Calu3 (cell line): ENCODE measurements at regions of chr7 and their contacts with region 1.

Region 1: DNA sequence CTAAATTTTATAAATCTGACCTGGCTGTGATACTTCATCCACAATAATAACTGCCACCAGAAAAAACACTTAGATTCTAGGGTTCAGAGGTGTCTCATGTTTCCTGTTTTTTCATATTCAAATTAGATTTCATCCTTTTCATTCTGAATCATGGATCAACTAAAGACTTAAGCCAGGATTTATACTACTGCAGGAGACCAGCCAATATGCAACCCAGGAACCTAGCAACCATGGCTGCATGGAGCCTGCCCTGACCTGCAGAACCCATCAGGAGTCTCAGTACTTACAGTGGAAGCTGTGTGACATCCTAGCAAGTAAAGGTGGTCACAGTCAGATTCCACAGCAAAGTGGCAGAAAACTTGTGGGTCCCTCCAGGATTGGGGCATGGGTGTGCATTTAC is 40.5 kb upstream of the RNF148 start:
- DNase-seq: no peak
- H3K4me3 Mint-ChIP-seq: no peak overlapping the region
- H3K27ac Mint-ChIP-seq: no peak overlapping the region
- H3K4me1 Mint-ChIP-seq: no peaks in the 10 kb centered on the region
- H3K27me3 Mint-ChIP-seq: no peaks in the 10 kb centered on the region
- CTCF ChIP-seq: no peak

Region 2: DNA sequence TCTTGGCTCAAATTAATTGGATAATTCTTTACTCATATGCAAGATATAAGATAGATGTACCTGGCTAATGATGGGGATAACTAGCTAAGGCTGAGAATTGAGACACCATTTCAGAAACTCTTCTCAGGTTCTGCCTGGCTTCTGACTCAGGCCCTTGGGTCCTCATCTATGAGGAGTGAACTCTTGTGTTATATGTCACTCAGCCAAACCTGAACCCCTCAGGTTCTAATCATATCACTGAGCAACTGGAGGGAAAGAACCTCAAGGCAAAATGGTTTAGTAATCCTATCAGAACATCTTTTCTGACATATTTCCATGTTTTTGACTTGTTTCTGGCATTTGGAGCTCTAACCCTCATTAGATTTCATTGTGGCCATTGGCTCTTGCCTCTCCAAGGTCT is 1654.3 kb before region 1 on chr7:
- CTCF ChIA-PET with region 1: interaction called, 13 read pairs
- intact Hi-C with region 1: no loop called
- DNase-seq: no peak
- H3K4me3 Mint-ChIP-seq: no peak overlapping the region
- H3K27ac Mint-ChIP-seq: no peak overlapping the region
- H3K4me1 Mint-ChIP-seq: peaks cover 38% of the 10 kb centered on the region
- H3K27me3 Mint-ChIP-seq: no peaks in the 10 kb centered on the region
- CTCF ChIP-seq: no peak

Region 3: DNA sequence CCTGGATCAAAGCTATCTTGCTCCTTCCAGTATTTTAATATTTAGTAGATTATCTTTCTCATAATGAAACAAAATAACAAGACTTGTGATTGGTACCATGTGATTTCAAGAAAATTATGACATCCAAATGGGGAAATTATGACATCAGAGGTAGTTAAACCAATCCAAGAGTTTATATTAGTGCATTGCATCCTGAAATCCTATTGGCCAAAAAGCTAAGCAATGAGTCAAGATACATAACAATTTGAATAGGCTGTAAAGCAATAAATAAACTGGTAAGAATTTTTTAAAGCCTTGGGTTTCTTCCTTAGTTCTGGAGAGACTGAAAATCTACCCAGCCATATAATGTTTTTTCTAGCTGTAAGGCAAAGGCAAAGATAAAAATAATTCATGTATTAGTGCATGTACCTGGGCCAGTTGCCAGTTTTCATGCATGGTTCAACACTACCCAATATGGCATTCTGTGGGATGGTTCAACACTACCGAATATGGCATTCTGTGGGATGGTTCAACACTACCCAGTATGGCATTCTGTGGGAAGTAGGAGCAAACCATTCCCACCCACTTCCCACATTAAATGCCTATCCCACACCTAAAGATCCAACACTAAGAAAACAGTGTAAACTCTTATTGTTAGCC is 40.2 kb before region 1 on chr7 and contains the start of gene RNF148:
- CTCF ChIA-PET with region 1: no interaction called
- intact Hi-C with region 1: no loop called
- DNase-seq: no peak
- H3K4me3 Mint-ChIP-seq: no peak within 1 kb of the TSS
- H3K27ac Mint-ChIP-seq: no peak within 1 kb of the TSS
- H3K4me1 Mint-ChIP-seq: no peaks in the 10 kb centered on the region
- H3K27me3 Mint-ChIP-seq: no peaks in the 10 kb centered on the region
- CTCF ChIP-seq: no peak
- total RNA-seq, gene RNF148: 0.76 and 0.99 TPM in 2 replicates